ENCODE measurements at regions of chr1 and their contacts with region 1.

Region 1: DNA sequence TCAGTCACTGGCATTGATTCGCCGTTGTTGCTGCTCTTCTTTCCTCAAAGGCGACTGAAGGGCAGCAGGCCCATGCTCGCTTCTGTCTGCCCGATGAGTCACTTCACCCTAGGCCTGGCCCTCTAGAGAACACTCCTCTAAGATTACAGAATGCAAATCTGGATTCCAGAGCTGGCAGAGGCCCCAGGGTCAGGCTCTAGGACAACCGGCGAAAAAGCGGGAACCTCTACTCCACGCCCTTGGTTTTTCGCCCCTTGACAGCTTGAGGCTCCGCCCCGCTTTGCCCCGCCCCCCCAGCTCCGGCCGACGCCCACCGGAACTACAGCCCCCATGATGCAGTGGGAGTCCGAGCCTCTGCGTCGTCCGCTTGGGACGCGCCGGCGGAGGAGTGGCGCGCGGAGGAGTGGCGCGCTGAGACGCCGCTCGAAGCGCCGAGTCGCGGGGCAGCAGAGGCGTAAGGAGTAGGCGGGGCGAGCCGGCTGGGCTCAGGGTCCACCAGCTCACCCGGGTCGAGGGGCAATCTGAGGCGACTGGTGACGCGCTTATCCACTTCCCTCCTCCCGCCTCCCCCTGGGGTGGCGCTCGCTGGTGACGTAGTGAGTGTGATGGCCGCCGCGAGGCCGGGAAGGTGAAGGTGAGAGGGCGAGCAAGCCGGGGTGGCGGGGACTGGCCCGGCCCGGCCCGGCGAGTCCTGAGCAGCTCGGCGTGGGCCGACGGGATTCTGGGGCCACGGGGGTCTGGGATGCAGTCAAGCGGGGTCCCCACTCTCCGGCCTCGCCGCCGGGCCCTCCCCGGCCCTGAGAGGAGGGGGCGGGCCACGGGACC is at the start of gene MFN2:
- DNase-seq: peak; percentile 81 to 96 (median 88)
- ATAC-seq: peak; percentile 92
- H3K4me3 ChIP-seq: peak within 1 kb of the TSS; percentile 90
- H3K4me3 Mint-ChIP-seq: peak within 1 kb of the TSS; percentile 96
- H3K27ac ChIP-seq: peak within 1 kb of the TSS; percentile 90 to 97
- H3K27ac Mint-ChIP-seq: peak within 1 kb of the TSS; percentile 93
- H3K4me1 ChIP-seq: peaks cover 25% of the 10 kb centered on the region
- H3K4me1 Mint-ChIP-seq: peaks cover 45% of the 10 kb centered on the region
- H3K27me3 ChIP-seq: no peaks in the 10 kb centered on the region
- H3K27me3 Mint-ChIP-seq: no peaks in the 10 kb centered on the region
- CTCF ChIP-seq: no peak
- total RNA-seq, gene MFN2: 33.0 to 38.1 TPM

Region 2: DNA sequence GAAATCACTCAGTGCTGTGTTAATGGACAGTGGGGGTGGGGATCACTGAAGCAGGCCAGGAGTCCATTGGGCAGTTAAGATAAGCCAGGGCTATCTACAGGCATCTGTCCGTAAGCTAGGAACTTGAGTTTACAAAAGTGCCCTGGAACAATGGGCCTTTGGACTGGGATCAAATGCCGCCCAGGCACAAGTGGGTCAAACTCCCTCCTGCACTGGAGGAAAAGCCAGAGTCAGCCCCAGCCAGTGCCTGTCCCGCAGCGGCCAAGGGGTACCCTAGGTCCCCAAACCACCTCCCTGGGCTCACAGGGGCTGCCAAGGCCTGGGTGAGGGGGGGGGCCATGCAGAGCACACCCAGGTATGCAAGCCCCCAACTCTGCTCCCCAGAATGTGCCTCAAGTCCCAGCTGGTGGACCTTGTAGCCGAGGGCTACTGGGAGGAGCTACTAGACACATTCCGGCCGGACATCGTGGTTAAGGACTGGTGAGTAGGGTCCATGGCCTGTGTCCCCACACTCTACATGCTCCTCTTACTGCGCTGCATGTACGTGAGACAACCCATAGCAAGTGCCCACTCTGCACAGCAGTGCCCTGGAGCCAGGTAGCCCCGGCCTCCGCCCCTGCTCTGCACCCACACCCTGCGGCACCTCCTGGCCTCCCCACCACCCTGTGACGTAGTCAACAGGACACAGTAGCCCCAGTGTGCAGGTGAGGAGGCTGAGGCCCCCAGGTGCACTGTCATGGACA is 308.3 kb before region 1 on chr1:
- CTCF ChIA-PET with region 1: no interaction called
- POLR2A ChIA-PET with region 1: no interaction called
- intact Hi-C with region 1: no loop called
- DNase-seq: no peak
- ATAC-seq: no peak
- H3K4me3 ChIP-seq: no peak overlapping the region
- H3K4me3 Mint-ChIP-seq: no peak overlapping the region
- H3K27ac ChIP-seq: no peak overlapping the region
- H3K27ac Mint-ChIP-seq: no peak overlapping the region
- H3K4me1 ChIP-seq: no peaks in the 10 kb centered on the region
- H3K4me1 Mint-ChIP-seq: no peaks in the 10 kb centered on the region
- H3K27me3 ChIP-seq: no peaks in the 10 kb centered on the region
- H3K27me3 Mint-ChIP-seq: no peaks in the 10 kb centered on the region
- CTCF ChIP-seq: no peak

Region 3: GRCh38 chr1:11805447-11806306 is 174.4 kb before region 1 on chr1 and contains the starts of genes CLCN6 and MTHFR:
- CTCF ChIA-PET with region 1: no interaction called
- POLR2A ChIA-PET with region 1: interaction called, 6 read pairs
- intact Hi-C with region 1: loop called in 1 of 2 experiments (anchors 2 kb)
- DNase-seq: peak; percentile 93 to 99 (median 97)
- ATAC-seq: peak; percentile 85
- H3K4me3 ChIP-seq: peak within 1 kb of the TSS; percentile 98
- H3K4me3 Mint-ChIP-seq: peak within 1 kb of the TSS; percentile 99
- H3K27ac ChIP-seq: peak within 1 kb of the TSS; percentile 86 to 92
- H3K27ac Mint-ChIP-seq: peak within 1 kb of the TSS; percentile 91
- H3K4me1 ChIP-seq: peaks cover 58% of the 10 kb centered on the region
- H3K4me1 Mint-ChIP-seq: peaks cover 66% of the 10 kb centered on the region
- H3K27me3 ChIP-seq: no peaks in the 10 kb centered on the region
- H3K27me3 Mint-ChIP-seq: no peaks in the 10 kb centered on the region
- CTCF ChIP-seq: no peak
- total RNA-seq, gene CLCN6: 10.9 to 11.2 TPM
- total RNA-seq, gene MTHFR: 30.8 to 31.3 TPM

Region 4: DNA sequence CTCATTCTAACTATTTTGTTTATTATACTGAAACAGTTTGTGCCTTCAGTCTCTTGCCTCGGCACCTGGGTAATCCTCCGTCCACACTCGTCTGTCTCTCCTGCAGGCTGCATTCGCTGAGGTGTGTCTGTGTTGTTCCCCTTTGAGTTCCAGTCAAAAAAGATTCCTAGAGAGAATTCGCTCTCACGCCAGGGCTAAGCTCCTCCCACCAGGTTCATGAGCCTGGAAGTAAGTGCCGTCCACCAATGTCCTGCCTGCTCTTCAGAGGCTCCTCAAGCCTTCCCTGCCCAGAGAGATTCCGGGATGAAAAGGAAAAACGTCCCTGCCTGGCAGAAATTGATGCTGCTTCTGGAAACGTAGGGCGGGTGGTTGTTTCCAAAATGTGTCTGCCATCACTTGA is 66.8 kb before region 1 on chr1:
- CTCF ChIA-PET with region 1: no interaction called
- POLR2A ChIA-PET with region 1: interaction called, 133 read pairs
- intact Hi-C with region 1: loop called (anchors 2 to 5 kb)
- DNase-seq: no peak
- ATAC-seq: no peak
- H3K4me3 ChIP-seq: no peak overlapping the region
- H3K4me3 Mint-ChIP-seq: no peak overlapping the region
- H3K27ac ChIP-seq: no peak overlapping the region
- H3K27ac Mint-ChIP-seq: no peak overlapping the region
- H3K4me1 ChIP-seq: peaks cover 12% of the 10 kb centered on the region
- H3K4me1 Mint-ChIP-seq: peaks cover 12% of the 10 kb centered on the region
- H3K27me3 ChIP-seq: no peaks in the 10 kb centered on the region
- H3K27me3 Mint-ChIP-seq: no peaks in the 10 kb centered on the region
- CTCF ChIP-seq: no peak

Region 5: DNA sequence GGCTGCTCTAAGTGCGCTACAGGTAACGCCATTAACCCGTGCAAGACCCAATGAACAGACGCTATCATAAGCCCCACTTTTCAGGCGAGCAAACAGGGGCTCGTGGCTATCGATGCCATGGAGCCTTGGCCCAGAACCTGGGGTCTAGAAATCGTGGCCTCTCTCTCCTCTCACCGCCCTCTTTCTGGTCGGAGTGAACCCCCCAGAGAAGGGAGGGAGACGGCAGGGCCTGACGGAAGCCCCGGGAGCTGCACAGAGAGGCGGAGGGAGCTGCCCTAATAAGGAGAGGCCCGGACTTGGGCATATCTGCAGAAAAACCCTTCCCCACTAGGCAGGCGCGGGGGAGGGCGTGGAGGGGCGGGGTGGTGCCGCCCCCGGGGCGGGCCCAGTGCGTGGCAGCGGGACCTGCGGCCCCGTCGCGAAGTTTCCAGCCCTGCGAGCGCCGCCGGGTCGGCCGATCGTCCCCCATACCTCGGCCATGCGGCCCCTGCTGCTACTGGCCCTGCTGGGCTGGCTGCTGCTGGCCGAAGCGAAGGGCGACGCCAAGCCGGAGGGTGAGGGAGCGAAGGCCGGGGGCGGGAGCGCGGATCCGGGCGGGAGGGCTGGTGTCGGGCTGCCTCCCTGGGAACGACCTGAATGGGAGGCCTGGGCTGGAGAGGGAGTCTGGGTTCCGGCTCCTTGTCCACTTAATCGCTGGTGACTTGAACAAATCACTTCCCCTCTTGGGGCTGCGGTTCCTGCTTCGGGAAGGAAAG is 45.6 kb before region 1 on chr1 and contains the start of gene PLOD1:
- CTCF ChIA-PET with region 1: no interaction called
- POLR2A ChIA-PET with region 1: interaction called, 3 read pairs
- intact Hi-C with region 1: loop called in 1 of 2 experiments (anchors 2 kb)
- DNase-seq: peak; percentile 72 to 94 (median 87)
- ATAC-seq: peak; percentile 100
- H3K4me3 ChIP-seq: peak within 1 kb of the TSS; percentile 64
- H3K4me3 Mint-ChIP-seq: peak within 1 kb of the TSS; percentile 85
- H3K27ac ChIP-seq: no peak within 1 kb of the TSS
- H3K27ac Mint-ChIP-seq: no peak within 1 kb of the TSS
- H3K4me1 ChIP-seq: peaks cover 16% of the 10 kb centered on the region
- H3K4me1 Mint-ChIP-seq: no peaks in the 10 kb centered on the region
- H3K27me3 ChIP-seq: no peaks in the 10 kb centered on the region
- H3K27me3 Mint-ChIP-seq: no peaks in the 10 kb centered on the region
- CTCF ChIP-seq: no peak
- total RNA-seq, gene PLOD1: 1.6 to 1.8 TPM

Region 6: DNA sequence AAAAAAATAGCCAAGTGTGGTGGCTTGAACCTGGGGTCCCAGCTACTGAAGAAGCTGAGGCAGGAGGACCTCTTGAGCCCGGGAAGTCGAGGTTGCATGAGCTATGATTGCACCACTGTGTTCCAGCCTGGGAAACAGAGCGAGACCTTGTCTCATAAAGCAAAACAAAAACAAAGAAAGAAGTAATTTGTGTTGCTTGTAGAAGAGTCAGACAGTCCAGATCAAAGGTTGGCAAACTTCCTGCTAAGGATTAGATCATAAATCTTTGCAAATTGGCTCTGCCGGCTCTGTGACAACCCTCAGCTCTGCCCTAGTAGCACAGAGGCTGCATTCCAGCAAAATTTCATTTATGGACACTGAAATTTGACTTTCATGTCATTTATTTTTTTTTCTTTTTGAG is 18.8 kb before region 1 on chr1:
- CTCF ChIA-PET with region 1: no interaction called
- POLR2A ChIA-PET with region 1: no interaction called
- intact Hi-C with region 1: no loop called
- DNase-seq: no peak
- ATAC-seq: no peak
- H3K4me3 ChIP-seq: no peak overlapping the region
- H3K4me3 Mint-ChIP-seq: no peak overlapping the region
- H3K27ac ChIP-seq: no peak overlapping the region
- H3K27ac Mint-ChIP-seq: no peak overlapping the region
- H3K4me1 ChIP-seq: no peaks in the 10 kb centered on the region
- H3K4me1 Mint-ChIP-seq: no peaks in the 10 kb centered on the region
- H3K27me3 ChIP-seq: no peaks in the 10 kb centered on the region
- H3K27me3 Mint-ChIP-seq: no peaks in the 10 kb centered on the region
- CTCF ChIP-seq: no peak

Region 7: DNA sequence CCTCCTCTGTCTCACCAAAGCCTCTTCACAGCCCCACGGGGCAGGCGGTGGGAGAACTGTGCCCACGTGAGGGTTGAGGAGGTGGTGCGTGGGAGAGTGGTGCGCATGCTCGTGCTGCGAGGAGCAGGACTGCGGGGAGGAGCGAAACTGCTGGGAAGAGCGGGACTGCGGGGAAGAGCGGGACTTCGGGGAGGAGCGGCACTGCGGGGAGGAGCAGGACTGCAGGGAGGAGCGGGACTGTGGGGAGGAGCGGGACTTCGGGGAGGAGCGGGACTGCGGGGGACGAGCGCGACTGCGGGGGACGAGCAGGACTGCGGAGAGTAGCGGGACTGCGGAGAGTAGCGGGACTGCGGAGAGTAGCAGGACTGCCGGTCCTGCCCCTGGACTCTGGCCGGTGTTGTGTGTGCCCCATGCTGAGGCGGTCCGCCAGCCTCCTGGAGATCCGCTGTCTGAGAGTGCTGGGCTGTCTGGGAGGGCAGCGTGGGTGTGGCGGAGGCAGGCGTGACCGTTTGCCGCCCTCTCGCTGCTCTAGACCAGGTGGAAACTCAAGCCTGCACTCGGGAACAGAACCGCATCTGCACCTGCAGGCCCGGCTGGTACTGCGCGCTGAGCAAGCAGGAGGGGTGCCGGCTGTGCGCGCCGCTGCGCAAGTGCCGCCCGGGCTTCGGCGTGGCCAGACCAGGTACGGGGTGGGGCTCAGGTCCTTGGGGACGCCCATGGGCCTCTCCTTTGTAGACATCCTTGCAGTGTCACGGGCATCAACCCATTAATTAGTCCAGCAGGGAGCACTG is 211.4 kb after region 1 on chr1:
- CTCF ChIA-PET with region 1: no interaction called
- POLR2A ChIA-PET with region 1: no interaction called
- intact Hi-C with region 1: no loop called
- DNase-seq: no peak
- ATAC-seq: no peak
- H3K4me3 ChIP-seq: no peak overlapping the region
- H3K4me3 Mint-ChIP-seq: no peak overlapping the region
- H3K27ac ChIP-seq: no peak overlapping the region
- H3K27ac Mint-ChIP-seq: no peak overlapping the region
- H3K4me1 ChIP-seq: peaks cover 52% of the 10 kb centered on the region
- H3K4me1 Mint-ChIP-seq: peaks cover 17% of the 10 kb centered on the region
- H3K27me3 ChIP-seq: no peaks in the 10 kb centered on the region
- H3K27me3 Mint-ChIP-seq: no peaks in the 10 kb centered on the region
- CTCF ChIP-seq: no peak

Region 8: GRCh38 chr1:12229835-12230548 is 249.9 kb after region 1 on chr1 and contains the start of gene VPS13D:
- CTCF ChIA-PET with region 1: no interaction called
- POLR2A ChIA-PET with region 1: no interaction called
- intact Hi-C with region 1: loop called in 1 of 2 experiments (anchors 5 kb)
- DNase-seq: peak; percentile 74 to 93 (median 82)
- ATAC-seq: peak; percentile 95
- H3K4me3 ChIP-seq: peak within 1 kb of the TSS; percentile 98
- H3K4me3 Mint-ChIP-seq: peak within 1 kb of the TSS; percentile 94
- H3K27ac ChIP-seq: peak within 1 kb of the TSS in 1 of 2 donors; percentile 50
- H3K27ac Mint-ChIP-seq: peak within 1 kb of the TSS; percentile 83
- H3K4me1 ChIP-seq: peaks cover 24% of the 10 kb centered on the region
- H3K4me1 Mint-ChIP-seq: peaks cover 27% of the 10 kb centered on the region
- H3K27me3 ChIP-seq: no peaks in the 10 kb centered on the region
- H3K27me3 Mint-ChIP-seq: no peaks in the 10 kb centered on the region
- CTCF ChIP-seq: peak; percentile 85
- total RNA-seq, gene VPS13D: 63.0 to 67.3 TPM

Measured in CD4-positive, alpha-beta T cell (primary cell).